Mammary epithelial cell (primary cell): ENCODE measurements at regions of chr6 and their contacts with region 1.

Region 1: GRCh38 chr6:158231551-158232315 is 63.6 kb downstream of the GTF2H5 start:
- DNase-seq: peak; percentile 60
- H3K4me3 ChIP-seq: peak overlapping the region; percentile 28 to 71 (median 59)
- H3K27ac ChIP-seq: peak overlapping the region; percentile 33
- H3K4me1 ChIP-seq: peaks cover 8% of the 10 kb centered on the region
- H3K27me3 ChIP-seq: no peaks in the 10 kb centered on the region
- CTCF ChIP-seq: no peak

Region 2: GRCh38 chr6:157981395-157982296 is 250.1 kb before region 1 on chr6 and contains the start of gene SYNJ2:
- CTCF ChIA-PET with region 1: no interaction called
- dilution Hi-C with region 1: no loop called
- in situ Hi-C with region 1: no loop called
- intact Hi-C with region 1: no loop called
- DNase-seq: peak; percentile 78
- H3K4me3 ChIP-seq: peak within 1 kb of the TSS; percentile 82 to 85 (median 83)
- H3K27ac ChIP-seq: peak within 1 kb of the TSS; percentile 26
- H3K4me1 ChIP-seq: peaks cover 32% of the 10 kb centered on the region
- H3K27me3 ChIP-seq: no peaks in the 10 kb centered on the region
- CTCF ChIP-seq: peak; percentile 13 to 43
- total RNA-seq, gene SYNJ2: 16.0 to 26.6 TPM

Region 3: DNA sequence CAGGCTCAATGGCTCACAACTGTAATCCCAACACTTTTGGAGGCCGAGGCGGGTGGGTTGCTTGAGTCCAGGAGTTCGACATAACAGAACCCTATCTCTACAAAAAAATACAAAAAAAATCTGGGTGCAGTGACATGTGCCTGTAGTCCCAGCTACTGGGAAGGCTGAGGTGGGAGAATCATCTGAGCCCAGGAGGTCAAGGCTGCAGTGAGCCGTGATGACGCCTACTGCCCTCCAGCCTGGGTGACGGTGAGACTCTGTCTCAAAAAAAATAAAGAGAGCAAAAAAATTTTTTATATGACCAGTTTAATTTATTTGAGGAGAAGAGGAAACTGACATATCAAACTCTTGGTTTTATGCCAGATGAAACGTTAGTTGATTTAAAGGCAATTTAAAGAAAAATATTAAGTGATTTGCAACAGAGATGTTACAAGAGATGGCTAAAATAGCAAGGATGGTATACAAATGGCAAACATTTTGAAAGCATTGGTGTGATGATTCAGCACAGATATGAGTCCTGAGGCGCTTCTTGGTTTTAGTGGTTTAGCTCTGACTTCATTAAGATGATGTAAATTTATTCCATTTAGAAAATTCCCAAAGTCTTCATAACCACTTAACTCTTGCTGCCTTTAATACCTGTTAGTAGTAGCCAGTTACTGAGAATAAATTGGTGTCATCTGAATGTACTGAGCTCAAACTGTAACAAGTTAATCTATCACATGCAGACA is 45.8 kb before region 1 on chr6:
- CTCF ChIA-PET with region 1: no interaction called
- dilution Hi-C with region 1: loop called (anchors 5 kb)
- in situ Hi-C with region 1: no loop called
- intact Hi-C with region 1: no loop called
- DNase-seq: peak; percentile 89
- H3K4me3 ChIP-seq: no peak overlapping the region
- H3K27ac ChIP-seq: no peak overlapping the region
- H3K4me1 ChIP-seq: peaks cover 15% of the 10 kb centered on the region
- H3K27me3 ChIP-seq: no peaks in the 10 kb centered on the region
- CTCF ChIP-seq: no peak

Region 4: DNA sequence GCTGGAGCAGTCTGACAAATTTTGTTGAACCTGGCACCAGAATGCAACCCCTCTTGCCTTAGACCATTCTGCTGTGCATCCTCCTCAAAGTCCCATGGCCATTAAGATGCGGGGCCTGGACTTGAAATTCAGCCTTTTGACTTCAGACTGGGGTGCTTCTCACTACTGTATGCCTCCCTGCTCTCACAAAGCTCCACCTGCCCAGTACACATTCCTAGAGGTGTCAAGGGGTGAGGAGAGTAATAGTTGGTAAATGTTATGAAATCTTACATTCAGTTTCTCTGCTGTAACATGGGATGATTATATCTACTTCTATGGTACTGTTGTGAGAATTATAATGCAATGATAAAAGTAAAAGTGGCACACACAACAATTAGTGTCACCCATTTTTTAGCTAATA is 151.3 kb after region 1 on chr6:
- CTCF ChIA-PET with region 1: interaction called, 5 read pairs
- dilution Hi-C with region 1: no loop called
- in situ Hi-C with region 1: no loop called
- intact Hi-C with region 1: loop called (anchors 2 kb)
- DNase-seq: no peak
- H3K4me3 ChIP-seq: no peak overlapping the region
- H3K27ac ChIP-seq: no peak overlapping the region
- H3K4me1 ChIP-seq: peaks cover 36% of the 10 kb centered on the region
- H3K27me3 ChIP-seq: no peaks in the 10 kb centered on the region
- CTCF ChIP-seq: no peak

Region 5: DNA sequence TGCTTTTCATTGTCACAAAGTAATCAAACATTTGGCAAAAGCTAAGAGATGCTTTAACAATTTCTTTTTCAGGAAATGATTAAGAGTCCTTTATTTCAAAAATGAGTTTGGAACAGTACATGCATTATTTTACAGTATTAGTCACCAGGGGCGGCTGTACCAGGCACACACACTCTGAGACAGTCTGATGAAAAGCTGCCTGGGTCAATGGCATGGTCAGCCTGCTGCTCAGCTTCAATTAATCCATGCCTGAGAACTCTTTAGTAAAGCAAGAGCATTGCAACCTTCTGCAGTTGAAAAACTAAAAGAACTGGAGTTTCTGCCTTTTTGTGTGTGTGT is 186.0 kb after region 1 on chr6:
- CTCF ChIA-PET with region 1: no interaction called
- dilution Hi-C with region 1: no loop called
- in situ Hi-C with region 1: no loop called
- intact Hi-C with region 1: loop called (anchors 5 kb)
- DNase-seq: peak; percentile 71
- H3K4me3 ChIP-seq: no peak overlapping the region
- H3K27ac ChIP-seq: peak overlapping the region; percentile 57
- H3K4me1 ChIP-seq: peaks cover 39% of the 10 kb centered on the region
- H3K27me3 ChIP-seq: no peaks in the 10 kb centered on the region
- CTCF ChIP-seq: no peak

Region 6: DNA sequence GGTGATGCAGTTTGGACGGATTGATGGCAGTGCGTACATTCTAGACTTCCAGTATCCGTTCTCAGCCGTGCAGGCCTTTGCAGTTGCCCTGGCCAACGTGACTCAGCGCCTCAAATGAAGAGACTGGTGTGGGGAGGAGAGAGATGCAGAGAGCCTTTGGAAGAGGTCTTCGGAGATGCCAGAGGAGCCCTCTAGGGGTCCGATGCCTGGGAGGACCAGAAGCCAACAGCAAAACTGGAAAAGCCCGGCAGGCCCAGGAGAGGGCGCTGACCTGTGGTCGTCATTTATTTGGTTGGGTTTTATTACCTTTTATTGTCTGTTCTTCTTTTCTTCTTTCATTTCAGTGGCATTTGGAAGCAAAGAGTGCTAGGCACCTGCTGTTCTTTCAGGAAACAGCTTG is 274.8 kb after region 1 on chr6:
- CTCF ChIA-PET with region 1: no interaction called
- dilution Hi-C with region 1: loop called (anchors 5 kb)
- in situ Hi-C with region 1: no loop called
- intact Hi-C with region 1: no loop called
- DNase-seq: no peak
- H3K4me3 ChIP-seq: no peak overlapping the region
- H3K27ac ChIP-seq: no peak overlapping the region
- H3K4me1 ChIP-seq: no peaks in the 10 kb centered on the region
- H3K27me3 ChIP-seq: no peaks in the 10 kb centered on the region
- CTCF ChIP-seq: no peak

Region 7: GRCh38 chr6:158605266-158605878 is 373.6 kb after region 1 on chr6:
- CTCF ChIA-PET with region 1: interaction called, 4 read pairs
- dilution Hi-C with region 1: no loop called
- in situ Hi-C with region 1: loop called in 1 of 2 experiments (anchors 25 kb)
- intact Hi-C with region 1: no loop called
- DNase-seq: peak; percentile 53
- H3K4me3 ChIP-seq: no peak overlapping the region
- H3K27ac ChIP-seq: no peak overlapping the region
- H3K4me1 ChIP-seq: no peaks in the 10 kb centered on the region
- H3K27me3 ChIP-seq: no peaks in the 10 kb centered on the region
- CTCF ChIP-seq: peak; percentile 78